Esophagus muscularis mucosa (tissue), 4 donors: ENCODE measurements at regions of chr15 and their contacts with region 1.

Region 1: GRCh38 chr15:99076552-99077308 is 28.1 kb upstream of the SYNM start:
- DNase-seq: no peak
- H3K4me3 ChIP-seq: peak overlapping the region; percentile 40 to 58 (median 47)
- H3K27ac ChIP-seq: peak overlapping the region; percentile 69 to 74 (median 71)
- H3K4me1 ChIP-seq: peaks cover 0 to 13% (median 7%) of the 10 kb centered on the region in 4 donors
- H3K27me3 ChIP-seq: no peaks in the 10 kb centered on the region
- CTCF ChIP-seq: peak; percentile 87 to 94 (median 88)
- EP300 ChIP-seq: no peak
- POLR2A ChIP-seq: no peak

Region 2: GRCh38 chr15:98442379-98442833 is 634.3 kb before region 1 on chr15:
- intact Hi-C with region 1: loop called (anchors 5 kb)
- DNase-seq: peak; percentile 89
- H3K4me3 ChIP-seq: no peak overlapping the region
- H3K27ac ChIP-seq: no peak overlapping the region
- H3K4me1 ChIP-seq: peaks cover 0 to 3% (median 0%) of the 10 kb centered on the region in 4 donors
- H3K27me3 ChIP-seq: peaks cover 0 to 6% (median 0%) of the 10 kb centered on the region in 4 donors
- CTCF ChIP-seq: peak; percentile 75 to 85 (median 81)
- EP300 ChIP-seq: no peak
- POLR2A ChIP-seq: no peak

Region 3: DNA sequence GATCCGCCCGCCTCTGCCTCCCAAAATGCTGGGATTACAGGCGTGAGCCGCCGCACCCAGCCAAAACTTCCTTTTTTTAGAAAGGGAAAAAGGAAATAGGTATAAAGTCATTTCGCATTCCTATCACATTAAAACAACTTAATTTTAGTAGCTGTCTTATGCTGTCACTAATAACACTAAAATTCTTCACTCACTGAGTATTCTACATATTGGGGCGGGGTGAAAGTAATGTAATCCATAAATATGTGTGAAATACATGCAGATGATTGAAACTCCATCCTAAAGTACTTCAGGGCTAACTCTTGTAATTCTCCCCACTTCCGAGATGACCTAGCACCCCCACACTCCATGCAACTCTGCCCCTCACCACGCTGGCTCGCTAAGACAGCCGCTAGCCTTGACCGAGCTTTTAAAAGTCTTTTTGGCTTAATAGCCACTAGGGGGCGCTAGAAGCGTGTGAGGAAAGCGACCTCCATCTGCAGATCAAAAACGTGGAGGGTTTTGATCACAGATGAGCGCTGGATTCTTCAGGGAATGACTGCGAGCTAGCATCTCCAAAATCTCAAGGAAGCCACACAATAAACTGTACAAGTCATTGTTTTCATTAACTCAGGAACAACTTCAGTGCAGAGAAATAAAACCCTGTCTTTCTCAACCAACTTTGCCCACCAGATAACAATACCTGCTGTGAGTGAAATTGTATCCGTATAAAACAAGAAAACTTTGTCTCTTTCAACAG is 557.7 kb before region 1 on chr15:
- intact Hi-C with region 1: loop called (anchors 5 kb)
- DNase-seq: peak; percentile 91
- H3K4me3 ChIP-seq: no peak overlapping the region
- H3K27ac ChIP-seq: no peak overlapping the region
- H3K4me1 ChIP-seq: peaks cover 0 to 9% (median 7%) of the 10 kb centered on the region in 4 donors
- H3K27me3 ChIP-seq: no peaks in the 10 kb centered on the region
- CTCF ChIP-seq: peak; percentile 67 to 89 (median 81)
- EP300 ChIP-seq: no peak
- POLR2A ChIP-seq: no peak

Region 4: DNA sequence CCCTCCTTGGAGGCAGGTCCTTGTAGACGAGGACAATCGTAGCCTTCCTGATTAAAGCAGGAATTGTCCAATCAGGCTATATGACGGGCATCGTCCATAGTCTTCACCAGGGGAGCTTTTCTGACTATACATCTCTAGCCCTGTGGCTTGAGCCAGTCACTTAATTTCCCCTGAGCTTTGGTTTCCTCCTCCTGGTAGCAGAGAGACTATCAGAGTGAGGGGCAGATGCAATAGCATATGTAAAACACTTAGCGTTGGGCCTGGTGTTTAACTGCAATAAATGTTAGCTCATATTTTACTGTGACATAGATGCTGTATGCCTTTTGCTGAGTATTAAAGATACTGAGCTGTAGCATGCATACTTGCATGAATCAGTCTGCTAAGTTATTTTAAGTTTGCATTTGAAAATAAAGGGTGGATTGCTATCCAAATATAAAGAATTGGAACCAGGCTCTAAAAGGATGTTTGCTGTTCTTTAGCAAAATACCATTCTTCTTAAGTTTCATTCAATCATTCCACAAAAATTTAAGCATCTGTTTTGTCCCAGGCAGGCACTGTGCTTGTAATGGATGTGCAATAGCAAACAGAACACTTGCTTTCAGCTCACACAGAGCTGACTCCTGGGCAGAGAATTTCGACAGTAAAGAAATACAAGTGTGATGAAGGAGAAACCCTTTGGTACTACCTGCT is 220.4 kb before region 1 on chr15:
- intact Hi-C with region 1: loop called (anchors 5 kb)
- DNase-seq: no peak
- H3K4me3 ChIP-seq: no peak overlapping the region
- H3K27ac ChIP-seq: peak overlapping the region; percentile 85 to 92 (median 88)
- H3K4me1 ChIP-seq: peaks cover 47 to 94% (median 85%) of the 10 kb centered on the region in 4 donors
- H3K27me3 ChIP-seq: no peaks in the 10 kb centered on the region
- CTCF ChIP-seq: no peak
- EP300 ChIP-seq: no peak
- POLR2A ChIP-seq: no peak

Region 5: DNA sequence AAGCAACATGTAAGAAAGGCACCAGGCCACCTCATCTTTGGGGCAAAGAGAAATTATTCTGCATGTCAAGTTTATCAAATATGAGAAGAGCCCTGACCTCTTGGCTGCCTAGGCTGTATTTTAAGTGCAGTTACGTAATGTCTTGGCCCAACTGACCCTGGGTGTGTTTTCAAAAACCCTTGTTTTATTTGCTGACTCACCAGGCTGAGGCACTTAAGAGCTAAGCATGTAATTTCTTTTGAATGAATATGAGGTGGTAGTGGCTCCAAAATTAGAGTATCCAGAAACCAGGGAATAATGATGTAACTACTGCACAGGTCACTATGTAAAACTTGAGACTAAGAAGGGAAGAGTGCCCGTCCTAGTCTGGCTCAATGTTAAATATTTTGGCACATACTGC is 93.4 kb before region 1 on chr15:
- intact Hi-C with region 1: no loop called
- DNase-seq: peak; percentile 91
- H3K4me3 ChIP-seq: no peak overlapping the region
- H3K27ac ChIP-seq: peak overlapping the region in 1 of 4 donors; percentile 30
- H3K4me1 ChIP-seq: peaks cover 7 to 13% (median 9%) of the 10 kb centered on the region in 4 donors
- H3K27me3 ChIP-seq: no peaks in the 10 kb centered on the region
- CTCF ChIP-seq: no peak
- EP300 ChIP-seq: no peak
- POLR2A ChIP-seq: no peak